ENCODE measurements at regions of chr15 and their contacts with region 1.

Region 1: GRCh38 chr15:80776420-80777045 is 2.6 kb upstream of the CEMIP start:
- DNase-seq: peak; percentile 64 to 77 (median 72)
- ATAC-seq: peak; percentile 38 to 66 (median 57)
- H3K4me3 ChIP-seq: no peak overlapping the region
- H3K27ac ChIP-seq: peak overlapping the region in 2 of 12 donors; percentile 40 to 58
- H3K4me1 ChIP-seq: peaks cover 2 to 49% (median 31%) of the 10 kb centered on the region in 12 donors
- H3K27me3 ChIP-seq: peaks cover 0 to 43% (median 19%) of the 10 kb centered on the region in 9 donors
- CTCF ChIP-seq: peak; percentile 74 to 89 (median 83)
- POLR2A ChIP-seq: no peak

Region 2: GRCh38 chr15:80567721-80568157 is 208.8 kb before region 1 on chr15:
- intact Hi-C with region 1: loop called (anchors 1 to 5 kb)
- DNase-seq: peak in 4 of 5 donors; percentile 33 to 50 (median 48)
- ATAC-seq: peak; percentile 56 to 85 (median 81)
- H3K4me3 ChIP-seq: no peak overlapping the region
- H3K27ac ChIP-seq: no peak overlapping the region
- H3K4me1 ChIP-seq: peaks cover 0 to 6% (median 0%) of the 10 kb centered on the region in 12 donors
- H3K27me3 ChIP-seq: peaks cover 0 to 5% (median 0%) of the 10 kb centered on the region in 9 donors
- CTCF ChIP-seq: peak; percentile 46 to 79 (median 64)
- POLR2A ChIP-seq: no peak

Region 3: DNA sequence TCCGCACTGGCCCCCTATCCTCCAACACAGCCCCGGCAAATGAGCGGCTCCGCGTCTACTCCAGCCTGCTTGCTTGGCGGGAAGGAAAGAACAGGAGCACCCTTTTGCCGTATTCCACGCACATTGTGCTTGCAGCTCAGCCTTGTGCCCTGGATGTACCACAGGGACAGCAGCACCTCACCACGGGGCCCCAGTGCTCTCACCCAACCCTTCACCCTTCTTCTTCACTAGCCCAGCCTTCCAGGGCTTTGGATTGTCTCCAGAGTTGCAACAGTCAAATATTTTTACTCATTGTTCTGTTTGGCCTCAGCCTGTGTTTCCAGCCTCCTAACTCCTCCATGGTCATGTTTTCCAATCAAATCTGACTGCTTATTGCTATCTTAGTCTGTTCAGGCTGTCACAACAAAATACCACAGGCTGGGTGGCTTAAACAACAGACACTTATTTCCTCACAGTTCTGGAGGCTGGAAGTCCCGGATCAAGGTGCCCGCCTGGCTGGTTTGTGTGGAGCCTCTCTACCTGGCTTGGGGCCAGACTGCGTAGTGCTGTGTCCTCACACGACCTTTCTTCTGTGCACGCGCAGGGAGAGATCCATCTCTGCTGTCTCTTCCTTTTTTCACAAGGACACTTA is 160.7 kb before region 1 on chr15:
- intact Hi-C with region 1: loop called in 8 of 10 experiments (anchors 1 to 10 kb)
- DNase-seq: peak; percentile 41 to 77 (median 67)
- ATAC-seq: peak; percentile 44 to 84 (median 76)
- H3K4me3 ChIP-seq: no peak overlapping the region
- H3K27ac ChIP-seq: peak overlapping the region in 1 of 12 donors; percentile 19
- H3K4me1 ChIP-seq: peaks cover 0 to 11% (median 6%) of the 10 kb centered on the region in 12 donors
- H3K27me3 ChIP-seq: no peaks in the 10 kb centered on the region
- CTCF ChIP-seq: no peak
- POLR2A ChIP-seq: no peak